Activated CD4-positive, alpha-beta T cell treated with anti-CD3 and anti-CD28 coated beads for 36 hours (primary cell): ENCODE measurements at regions of chr20 and their contacts with region 1.

Region 1: GRCh38 chr20:54320115-54320607 is 112.3 kb downstream of the PFDN4 start:
- DNase-seq: peak; percentile 8
- ATAC-seq: peak; percentile 83
- H3K4me3 Mint-ChIP-seq: no peak overlapping the region
- H3K27ac Mint-ChIP-seq: peak overlapping the region; percentile 70
- H3K4me1 Mint-ChIP-seq: peaks cover 47% of the 10 kb centered on the region
- H3K27me3 Mint-ChIP-seq: peaks cover 23% of the 10 kb centered on the region

Region 2: DNA sequence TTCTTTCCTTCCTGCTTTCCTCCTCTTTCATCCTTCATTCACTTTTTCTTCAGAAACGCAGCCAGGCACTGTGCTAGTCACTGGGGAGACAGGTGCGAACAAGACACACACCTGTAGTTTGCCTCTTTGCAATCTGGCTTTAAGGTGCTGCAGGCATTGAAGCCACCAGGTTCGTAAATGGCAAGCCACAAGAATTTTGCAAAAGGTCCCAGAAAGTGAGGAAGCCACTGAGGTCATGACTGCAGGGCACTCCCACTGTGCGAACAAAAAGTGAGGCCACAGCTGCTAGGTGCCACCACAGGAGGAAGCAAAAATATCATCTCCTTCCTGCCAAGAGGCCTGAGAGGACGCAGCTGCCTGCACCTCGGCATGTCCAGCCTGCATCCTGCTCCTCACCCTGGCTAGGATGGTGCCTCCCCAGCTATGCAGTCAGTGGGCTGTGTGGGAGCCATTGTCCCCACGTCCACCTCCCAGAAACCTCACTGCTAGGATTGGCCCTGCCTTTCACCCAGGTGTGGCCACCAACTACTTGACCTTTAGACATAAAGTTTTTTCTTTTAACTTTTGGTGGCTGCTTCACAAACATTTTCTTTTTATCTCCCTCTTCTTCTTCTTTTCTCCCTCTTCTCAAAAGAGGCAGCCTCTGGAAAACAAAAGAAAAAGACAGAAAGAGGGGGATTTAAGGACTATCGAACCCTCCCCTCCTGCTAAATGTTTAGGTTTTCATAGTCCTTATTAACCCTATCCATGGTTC is 480.6 kb before region 1 on chr20:
- CTCF ChIA-PET with region 1: no interaction called
- POLR2A ChIA-PET with region 1: no interaction called
- intact Hi-C with region 1: no loop called
- DNase-seq: peak; percentile 66
- ATAC-seq: peak; percentile 16
- H3K4me3 Mint-ChIP-seq: peak overlapping the region; percentile 45
- H3K27ac Mint-ChIP-seq: peak overlapping the region; percentile 62
- H3K4me1 Mint-ChIP-seq: peaks cover 69% of the 10 kb centered on the region
- H3K27me3 Mint-ChIP-seq: no peaks in the 10 kb centered on the region

Region 3: DNA sequence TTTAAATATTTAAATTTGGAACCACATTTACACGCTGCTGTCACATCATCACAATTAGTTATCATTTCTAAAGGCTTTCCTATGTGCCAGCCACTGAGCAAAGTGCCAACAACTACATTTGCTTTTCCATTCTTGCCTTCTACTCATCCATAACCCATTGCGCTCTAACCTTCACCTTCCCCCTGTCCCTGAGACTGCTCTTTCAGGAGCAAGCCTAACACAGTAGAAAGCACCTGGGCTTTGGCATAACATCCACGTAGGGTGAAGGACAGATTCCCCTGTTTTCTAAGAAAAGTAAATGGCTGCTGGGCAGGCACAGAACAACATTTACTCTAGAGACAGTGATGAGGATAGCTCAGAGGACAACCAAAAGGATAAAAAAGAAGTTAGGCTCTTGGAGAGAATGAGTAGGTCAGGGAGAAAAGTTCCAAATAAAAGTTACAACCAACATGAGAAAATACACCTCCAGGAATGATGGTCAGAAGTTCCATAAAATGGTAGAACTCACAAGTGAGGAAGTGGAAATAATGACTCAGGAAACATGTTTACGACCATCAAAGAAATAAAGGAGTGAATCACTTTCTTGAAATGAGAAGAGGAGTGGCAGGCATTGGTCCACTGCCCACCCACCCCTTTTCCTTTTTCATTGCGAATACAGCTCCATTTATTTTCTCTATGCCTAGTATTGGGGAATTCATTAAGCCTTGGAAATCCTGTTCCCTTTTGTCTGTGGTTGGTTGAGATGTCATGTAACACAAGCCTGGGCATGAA is 35.0 kb before region 1 on chr20:
- CTCF ChIA-PET with region 1: no interaction called
- POLR2A ChIA-PET with region 1: no interaction called
- intact Hi-C with region 1: loop called (anchors 1 kb)
- DNase-seq: peak; percentile 68
- ATAC-seq: peak; percentile 87
- H3K4me3 Mint-ChIP-seq: peak overlapping the region; percentile 62
- H3K27ac Mint-ChIP-seq: peak overlapping the region; percentile 94
- H3K4me1 Mint-ChIP-seq: peaks cover 22% of the 10 kb centered on the region
- H3K27me3 Mint-ChIP-seq: peaks cover 11% of the 10 kb centered on the region

Region 4: GRCh38 chr20:54377992-54378773 is 58.0 kb after region 1 on chr20:
- CTCF ChIA-PET with region 1: no interaction called
- POLR2A ChIA-PET with region 1: no interaction called
- intact Hi-C with region 1: loop called in 1 of 2 experiments (anchors 5 kb)
- DNase-seq: no peak
- ATAC-seq: no peak
- H3K4me3 Mint-ChIP-seq: no peak overlapping the region
- H3K27ac Mint-ChIP-seq: no peak overlapping the region
- H3K4me1 Mint-ChIP-seq: no peaks in the 10 kb centered on the region
- H3K27me3 Mint-ChIP-seq: peaks cover 16% of the 10 kb centered on the region

Region 5: GRCh38 chr20:54475334-54476168 is 155.4 kb after region 1 on chr20 and contains the start of gene DOK5:
- CTCF ChIA-PET with region 1: no interaction called
- POLR2A ChIA-PET with region 1: interaction called, 13 read pairs
- intact Hi-C with region 1: no loop called
- DNase-seq: no peak
- ATAC-seq: no peak
- H3K4me3 Mint-ChIP-seq: peak within 1 kb of the TSS; percentile 53
- H3K27ac Mint-ChIP-seq: no peak within 1 kb of the TSS
- H3K4me1 Mint-ChIP-seq: peaks cover 9% of the 10 kb centered on the region
- H3K27me3 Mint-ChIP-seq: peaks cover 54% of the 10 kb centered on the region
- total RNA-seq, gene DOK5: 2.1 to 2.9 TPM